ENCODE measurements at regions of chr20 and their contacts with region 1.

Region 1: GRCh38 chr20:25399037-25399430 is 8.4 kb upstream of the ABHD12 start:
- DNase-seq: peak; percentile 59
- H3K4me3 ChIP-seq: no peak overlapping the region
- H3K27ac ChIP-seq: no peak overlapping the region
- H3K27me3 ChIP-seq: no peaks in the 10 kb centered on the region
- CTCF ChIP-seq: peak; percentile 68

Region 2: GRCh38 chr20:24992487-24993205 is 406.4 kb before region 1 on chr20 and contains the start of gene APMAP:
- CTCF ChIA-PET with region 1: interaction called, 49 read pairs
- POLR2A ChIA-PET with region 1: no interaction called
- DNase-seq: peak; percentile 61
- H3K4me3 ChIP-seq: peak within 1 kb of the TSS; percentile 95
- H3K27ac ChIP-seq: peak within 1 kb of the TSS; percentile 88
- H3K27me3 ChIP-seq: peaks cover 5% of the 10 kb centered on the region
- CTCF ChIP-seq: no peak
- polyA plus RNA-seq, gene APMAP: 94.5 and 97.4 TPM in 2 replicates

Region 3: DNA sequence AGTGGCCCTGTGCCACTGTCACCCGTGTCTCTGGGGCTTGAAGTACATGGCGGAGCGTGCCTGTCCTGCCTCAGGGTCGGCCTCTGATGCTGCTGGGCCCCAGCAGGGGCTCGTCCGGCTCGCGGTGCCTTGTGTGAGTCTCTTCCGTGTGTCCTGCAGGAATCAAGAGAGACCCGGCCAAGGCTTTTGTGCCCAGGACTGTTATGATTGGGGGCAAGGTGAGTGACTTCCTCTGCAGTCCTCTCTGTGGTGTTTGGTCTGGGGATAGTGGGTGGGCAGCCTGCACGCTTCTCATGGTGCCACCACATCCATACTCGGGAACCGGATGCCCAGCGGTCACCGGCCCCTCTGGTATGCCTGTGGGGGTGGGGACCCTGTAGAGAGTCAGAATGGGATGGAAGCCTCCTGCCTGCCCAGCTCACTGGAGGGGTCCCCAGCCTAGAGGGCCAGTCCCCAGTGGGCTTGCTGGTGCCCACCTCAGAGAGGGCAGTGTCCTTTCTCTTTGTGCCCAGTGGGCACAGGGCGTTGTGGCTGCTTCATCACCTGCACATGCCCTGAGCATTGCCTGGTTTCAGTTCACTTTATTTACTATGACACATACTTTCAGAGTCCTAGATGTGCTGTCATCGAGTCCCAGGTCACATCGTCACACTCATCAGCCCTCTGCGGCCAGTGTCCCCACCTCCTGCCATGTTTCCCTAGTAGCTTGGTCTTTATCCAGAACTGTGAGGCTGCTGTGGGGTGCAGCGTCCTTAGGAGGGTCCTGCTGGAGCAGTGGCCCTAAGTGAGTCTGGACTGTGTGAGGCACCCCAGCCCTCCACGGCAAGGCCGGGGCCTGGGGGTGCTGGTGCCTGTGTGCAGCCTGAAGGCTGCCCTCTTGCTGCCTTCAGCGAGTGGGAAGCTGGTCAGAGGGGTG is 110.5 kb before region 1 on chr20:
- CTCF ChIA-PET with region 1: interaction called, 93 read pairs
- POLR2A ChIA-PET with region 1: no interaction called
- DNase-seq: no peak
- H3K4me3 ChIP-seq: no peak overlapping the region
- H3K27ac ChIP-seq: no peak overlapping the region
- H3K27me3 ChIP-seq: no peaks in the 10 kb centered on the region
- CTCF ChIP-seq: no peak

Region 4: DNA sequence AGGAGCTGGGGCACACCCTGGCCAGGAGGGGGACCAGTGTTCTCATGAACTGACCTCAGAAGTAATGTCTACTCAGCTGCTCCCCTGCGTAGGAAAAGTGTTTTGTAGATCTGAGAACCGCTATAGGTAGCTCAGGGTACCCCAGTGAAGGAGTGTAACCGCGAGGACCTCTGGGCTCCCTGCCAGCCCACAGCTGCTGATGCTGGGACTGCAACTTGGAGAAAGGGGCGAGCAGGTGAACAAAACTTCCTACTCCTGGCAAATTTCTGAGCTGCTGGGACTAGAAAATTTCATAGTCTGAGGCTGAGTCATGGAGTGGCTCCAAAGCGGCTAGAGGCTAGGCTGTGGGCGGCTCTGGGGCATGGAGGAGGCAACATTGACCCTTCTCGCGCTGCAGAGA is 99.2 kb before region 1 on chr20:
- CTCF ChIA-PET with region 1: interaction called, 93 read pairs
- POLR2A ChIA-PET with region 1: interaction called, 7 read pairs
- DNase-seq: no peak
- H3K4me3 ChIP-seq: no peak overlapping the region
- H3K27ac ChIP-seq: peak overlapping the region; percentile 39
- H3K27me3 ChIP-seq: no peaks in the 10 kb centered on the region
- CTCF ChIP-seq: 0 out of 2 replicates have a peak, but pooled peaks have one; percentile 12

Region 5: DNA sequence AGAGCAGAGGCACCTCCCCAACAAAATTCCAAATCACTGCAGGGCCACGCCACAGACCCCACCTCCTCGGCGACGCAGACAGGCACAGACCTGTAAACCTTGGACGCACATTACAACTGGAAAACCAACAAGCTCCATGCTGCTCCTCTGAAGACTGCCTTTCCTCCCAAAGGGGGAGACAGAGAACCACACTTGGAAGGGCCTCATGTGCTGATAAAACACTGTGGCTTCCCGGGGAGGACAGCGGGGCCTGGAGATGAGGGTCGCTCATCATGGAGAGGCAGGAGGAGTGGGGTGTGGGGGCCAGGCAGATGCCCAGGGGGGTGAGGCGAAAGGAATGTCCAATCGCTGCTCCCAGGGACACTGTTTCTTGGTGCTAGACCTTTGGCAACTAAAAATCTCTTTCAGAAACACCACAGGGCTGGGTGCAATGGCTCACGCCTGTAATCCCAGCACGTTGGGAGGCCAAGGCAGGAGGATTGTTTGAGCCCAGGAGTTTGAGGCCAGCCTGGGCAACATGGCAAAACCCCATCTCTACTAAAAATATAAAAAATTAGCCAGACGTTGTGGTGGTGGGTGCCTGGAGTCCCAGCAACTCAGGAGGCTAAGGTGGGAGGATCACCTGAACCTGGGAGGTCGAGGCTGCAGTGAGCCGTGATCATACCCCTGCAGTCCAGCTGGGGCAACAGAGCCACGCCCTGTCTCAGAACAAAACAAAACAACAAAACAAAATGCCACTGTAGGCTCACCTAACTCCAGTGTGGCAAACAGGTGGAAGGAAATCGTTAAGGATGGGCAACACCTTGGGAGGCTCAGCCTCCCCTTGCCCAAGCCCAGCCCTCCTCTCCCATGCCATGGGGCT is 62.2 kb before region 1 on chr20:
- CTCF ChIA-PET with region 1: interaction called, 35 read pairs
- POLR2A ChIA-PET with region 1: no interaction called
- DNase-seq: no peak
- H3K4me3 ChIP-seq: no peak overlapping the region
- H3K27ac ChIP-seq: no peak overlapping the region
- H3K27me3 ChIP-seq: no peaks in the 10 kb centered on the region
- CTCF ChIP-seq: peak; percentile 59

Region 6: GRCh38 chr20:25623736-25624499 is 224.9 kb after region 1 on chr20 and contains the start of gene NANP:
- CTCF ChIA-PET with region 1: no interaction called
- POLR2A ChIA-PET with region 1: no interaction called
- DNase-seq: peak; percentile 94
- H3K4me3 ChIP-seq: peak within 1 kb of the TSS; percentile 91
- H3K27ac ChIP-seq: peak within 1 kb of the TSS; percentile 89
- H3K27me3 ChIP-seq: no peaks in the 10 kb centered on the region
- CTCF ChIP-seq: no peak
- polyA plus RNA-seq, gene NANP: 5.9 and 6.7 TPM in 2 replicates

Region 7: GRCh38 chr20:25706793-25707192 is 307.8 kb after region 1 on chr20:
- CTCF ChIA-PET with region 1: no interaction called
- POLR2A ChIA-PET with region 1: no interaction called
- DNase-seq: no peak
- H3K4me3 ChIP-seq: no peak overlapping the region
- H3K27ac ChIP-seq: no peak overlapping the region
- H3K27me3 ChIP-seq: no peaks in the 10 kb centered on the region
- CTCF ChIP-seq: no peak

Measured in AG04450 (cell line).